Gastrocnemius medialis (tissue), 4 donors: ENCODE measurements at regions of chr3 and their contacts with region 1.

Region 1: DNA sequence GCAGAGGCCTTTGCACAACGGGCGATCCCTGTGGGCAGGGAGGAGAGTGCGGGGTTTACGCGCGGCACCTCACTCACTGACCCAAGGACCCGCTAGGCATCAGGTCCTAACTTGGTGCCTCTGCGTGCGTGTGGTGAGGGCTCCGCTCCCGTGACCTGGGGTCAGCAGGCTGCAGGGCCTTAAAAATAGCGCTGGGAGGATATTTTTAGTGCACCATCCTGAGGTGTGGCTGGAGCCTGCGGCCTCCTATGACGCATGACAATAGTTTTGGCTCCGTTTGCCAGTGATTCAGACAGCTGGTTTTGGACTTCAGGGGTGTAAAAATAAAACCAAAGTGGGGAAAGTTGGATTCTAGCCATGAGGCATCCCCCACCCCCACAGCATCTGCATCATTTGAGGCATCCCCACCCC is 139.0 kb downstream of the FAM43A start:
- DNase-seq: peak; percentile 71 to 75
- ATAC-seq: peak; percentile 90 to 93
- H3K4me3 ChIP-seq: peak overlapping the region in 2 of 4 donors; percentile 6 to 16
- H3K27ac ChIP-seq: peak overlapping the region; percentile 39 to 77 (median 67)
- H3K4me1 ChIP-seq: peaks cover 19% of the 10 kb centered on the region in 2 donors
- H3K27me3 ChIP-seq: no peaks in the 10 kb centered on the region
- CTCF ChIP-seq: no peak
- POLR2A ChIP-seq: peak; percentile 44 to 55

Region 2: GRCh38 chr3:194632809-194633348 is 191.8 kb before region 1 on chr3:
- in situ Hi-C with region 1: no loop called
- intact Hi-C with region 1: no loop called
- DNase-seq: no peak
- ATAC-seq: peak in 1 of 2 donors; percentile 33
- H3K4me3 ChIP-seq: peak overlapping the region; percentile 40 to 63 (median 55)
- H3K27ac ChIP-seq: peak overlapping the region in 3 of 4 donors; percentile 38 to 70 (median 69)
- H3K4me1 ChIP-seq: no peaks in the 10 kb centered on the region
- H3K27me3 ChIP-seq: no peaks in the 10 kb centered on the region
- CTCF ChIP-seq: no peak
- POLR2A ChIP-seq: peak in 1 of 2 donors; percentile 24

Region 3: DNA sequence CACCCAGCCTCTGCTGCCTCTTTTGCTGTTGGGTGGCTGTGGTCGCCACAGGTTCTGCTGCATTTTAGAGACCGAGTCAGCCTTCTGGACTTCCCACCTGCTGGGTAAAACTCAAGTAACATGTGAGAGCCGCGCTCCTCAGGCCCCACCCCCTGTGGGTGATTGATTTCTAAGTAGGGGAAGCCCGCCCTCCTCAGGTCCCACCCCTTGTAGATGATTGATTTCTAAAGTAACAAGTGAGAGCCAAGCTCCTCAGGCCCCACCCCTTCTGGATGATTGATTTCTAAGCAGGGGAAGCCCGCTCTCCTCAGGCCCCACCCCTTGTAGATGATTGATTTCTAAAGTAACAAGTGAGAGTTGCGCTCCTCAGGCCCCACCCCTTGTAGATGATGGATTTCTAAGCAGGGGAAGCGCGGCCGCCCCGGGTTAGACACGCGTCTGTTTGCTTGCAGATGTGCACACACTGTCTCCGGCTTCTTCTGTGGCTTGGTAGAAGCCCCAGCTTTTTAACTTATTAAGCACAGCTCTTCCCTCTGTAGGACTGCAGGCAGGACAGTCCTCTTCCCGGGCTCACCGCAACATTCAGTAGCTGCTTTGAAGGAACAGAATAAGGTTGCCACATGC is 55.6 kb before region 1 on chr3:
- in situ Hi-C with region 1: no loop called
- intact Hi-C with region 1: loop called (anchors 5 kb)
- DNase-seq: peak; percentile 91
- ATAC-seq: peak; percentile 95 to 96
- H3K4me3 ChIP-seq: peak overlapping the region; percentile 43 to 65 (median 48)
- H3K27ac ChIP-seq: peak overlapping the region; percentile 43 to 62 (median 53)
- H3K4me1 ChIP-seq: peaks cover 10 to 19% of the 10 kb centered on the region in 2 donors
- H3K27me3 ChIP-seq: no peaks in the 10 kb centered on the region
- CTCF ChIP-seq: no peak
- POLR2A ChIP-seq: peak in 1 of 2 donors; percentile 19

Region 4: GRCh38 chr3:194852825-194853537 is 28.3 kb after region 1 on chr3:
- in situ Hi-C with region 1: no loop called
- intact Hi-C with region 1: loop called (anchors 2 kb)
- DNase-seq: peak; percentile 77
- ATAC-seq: peak; percentile 77 to 82
- H3K4me3 ChIP-seq: no peak overlapping the region
- H3K27ac ChIP-seq: peak overlapping the region; percentile 34 to 80 (median 58)
- H3K4me1 ChIP-seq: peaks cover 22 to 39% of the 10 kb centered on the region in 2 donors
- H3K27me3 ChIP-seq: no peaks in the 10 kb centered on the region
- CTCF ChIP-seq: no peak
- POLR2A ChIP-seq: no peak